MCF 10A (cell line): ENCODE measurements at regions of chr22 and their contacts with region 1.

Region 1: DNA sequence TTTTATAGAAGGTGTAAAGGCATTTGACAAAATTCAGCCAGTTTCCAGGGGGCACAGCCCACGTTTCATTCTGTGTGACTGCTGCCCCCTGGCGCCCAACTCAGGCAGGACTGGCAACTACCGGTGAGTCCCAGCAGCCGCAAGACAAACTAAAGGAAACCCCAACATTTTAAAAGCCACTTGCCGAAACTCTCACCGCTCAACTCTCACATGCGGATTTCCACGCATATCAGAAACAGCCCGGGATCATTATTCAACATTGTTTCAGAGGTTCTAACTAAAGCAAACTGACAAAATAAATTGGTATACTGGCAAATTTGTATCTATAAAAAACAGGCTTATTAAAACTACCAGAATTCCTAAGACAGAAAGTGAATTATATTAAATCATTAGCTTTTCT is 48.2 kb downstream of the MORC2 start:
- DNase-seq: peak; percentile 72
- H3K4me3 Mint-ChIP-seq: no peak overlapping the region
- H3K27ac Mint-ChIP-seq: no peak overlapping the region
- H3K4me1 Mint-ChIP-seq: no peaks in the 10 kb centered on the region
- H3K27me3 Mint-ChIP-seq: no peaks in the 10 kb centered on the region
- CTCF ChIP-seq: peak; percentile 86

Region 2: GRCh38 chr22:30763815-30764686 is 156.4 kb before region 1 on chr22:
- CTCF ChIA-PET with region 1: interaction called, 167 read pairs
- POLR2A ChIA-PET with region 1: interaction called, 27 read pairs
- intact Hi-C with region 1: loop called (anchors 1 kb)
- DNase-seq: peak; percentile 91
- H3K4me3 Mint-ChIP-seq: no peak overlapping the region
- H3K27ac Mint-ChIP-seq: peak overlapping the region; percentile 10
- H3K4me1 Mint-ChIP-seq: peaks cover 10% of the 10 kb centered on the region
- H3K27me3 Mint-ChIP-seq: no peaks in the 10 kb centered on the region
- CTCF ChIP-seq: peak; percentile 71

Region 3: GRCh38 chr22:30885591-30885990 is 34.8 kb before region 1 on chr22:
- CTCF ChIA-PET with region 1: interaction called, 11 read pairs
- POLR2A ChIA-PET with region 1: no interaction called
- intact Hi-C with region 1: no loop called
- DNase-seq: no peak
- H3K4me3 Mint-ChIP-seq: no peak overlapping the region
- H3K27ac Mint-ChIP-seq: peak overlapping the region; percentile 66
- H3K4me1 Mint-ChIP-seq: no peaks in the 10 kb centered on the region
- H3K27me3 Mint-ChIP-seq: no peaks in the 10 kb centered on the region
- CTCF ChIP-seq: no peak

Region 4: DNA sequence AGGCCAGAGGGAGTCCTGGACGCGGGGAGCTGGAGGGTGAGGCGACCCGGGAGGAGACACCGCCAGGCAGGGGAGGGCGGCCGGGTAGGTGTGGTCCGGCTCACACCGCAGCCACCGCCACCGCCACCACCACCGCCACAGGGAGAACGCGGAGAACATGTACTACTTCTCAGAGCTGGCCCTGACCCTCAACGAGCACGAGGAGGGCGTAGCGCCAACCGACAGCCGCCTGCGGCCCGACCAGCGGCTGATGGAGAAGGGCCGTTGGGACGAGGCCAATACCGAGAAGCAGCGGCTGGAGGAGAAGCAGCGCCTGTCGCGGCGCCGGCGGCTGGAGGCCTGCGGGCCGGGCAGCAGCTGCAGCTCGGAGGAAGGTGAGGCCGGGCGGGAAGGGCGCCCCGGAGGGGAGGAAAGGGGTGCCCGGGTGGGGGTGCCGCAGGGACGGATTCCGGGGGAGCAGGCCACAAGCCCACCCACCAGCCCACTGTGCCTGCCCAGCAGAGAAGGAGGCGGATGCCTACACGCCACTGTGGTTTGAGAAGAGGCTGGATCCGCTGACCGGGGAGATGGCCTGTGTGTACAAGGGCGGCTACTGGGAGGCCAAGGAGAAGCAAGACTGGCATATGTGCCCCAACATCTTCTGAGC is 14.6 kb before region 1 on chr22:
- CTCF ChIA-PET with region 1: interaction called, 21 read pairs
- POLR2A ChIA-PET with region 1: interaction called, 3 read pairs
- intact Hi-C with region 1: no loop called
- DNase-seq: no peak
- H3K4me3 Mint-ChIP-seq: no peak overlapping the region
- H3K27ac Mint-ChIP-seq: no peak overlapping the region
- H3K4me1 Mint-ChIP-seq: no peaks in the 10 kb centered on the region
- H3K27me3 Mint-ChIP-seq: no peaks in the 10 kb centered on the region
- CTCF ChIP-seq: no peak